Panc1 (cell line): ENCODE measurements at regions of chr18 and their contacts with region 1.

Region 1: DNA sequence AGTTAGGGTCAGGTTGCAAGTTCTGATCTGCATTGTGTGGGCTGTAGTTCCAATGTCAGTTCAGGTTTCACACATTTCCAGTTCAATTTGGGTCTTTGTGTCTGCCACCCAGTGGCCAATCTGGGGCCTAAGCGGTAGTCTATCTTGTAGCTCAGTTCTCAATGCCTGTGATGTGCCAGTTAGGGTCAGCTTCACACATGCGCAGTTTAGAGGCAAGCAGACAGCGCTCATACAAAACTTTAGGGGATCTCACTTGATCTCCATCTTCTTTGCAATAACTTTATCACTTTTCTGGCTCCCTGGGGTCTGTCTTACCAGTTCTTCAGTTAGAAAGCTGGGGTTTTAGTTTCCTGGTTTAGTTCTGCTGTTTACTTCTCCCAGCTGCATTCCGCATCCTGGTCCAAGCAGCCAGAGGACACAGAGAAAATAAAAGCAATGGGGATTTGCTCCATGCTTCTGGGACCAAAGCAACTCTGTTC is 11.0 kb upstream of the ZNF24 start:
- DNase-seq: peak; percentile 59
- ATAC-seq: peak; percentile 99
- H3K4me3 ChIP-seq: peak overlapping the region in 1 of 2 experiments; percentile 34; a peak in 1 of 4 replicates
- H3K27ac ChIP-seq: no peak overlapping the region
- H3K4me1 ChIP-seq: no peaks in the 10 kb centered on the region; the same call in 1 of the 2 replicates
- H3K27me3 ChIP-seq: no peaks in the 10 kb centered on the region
- CTCF ChIP-seq: peak; percentile 78

Region 2: DNA sequence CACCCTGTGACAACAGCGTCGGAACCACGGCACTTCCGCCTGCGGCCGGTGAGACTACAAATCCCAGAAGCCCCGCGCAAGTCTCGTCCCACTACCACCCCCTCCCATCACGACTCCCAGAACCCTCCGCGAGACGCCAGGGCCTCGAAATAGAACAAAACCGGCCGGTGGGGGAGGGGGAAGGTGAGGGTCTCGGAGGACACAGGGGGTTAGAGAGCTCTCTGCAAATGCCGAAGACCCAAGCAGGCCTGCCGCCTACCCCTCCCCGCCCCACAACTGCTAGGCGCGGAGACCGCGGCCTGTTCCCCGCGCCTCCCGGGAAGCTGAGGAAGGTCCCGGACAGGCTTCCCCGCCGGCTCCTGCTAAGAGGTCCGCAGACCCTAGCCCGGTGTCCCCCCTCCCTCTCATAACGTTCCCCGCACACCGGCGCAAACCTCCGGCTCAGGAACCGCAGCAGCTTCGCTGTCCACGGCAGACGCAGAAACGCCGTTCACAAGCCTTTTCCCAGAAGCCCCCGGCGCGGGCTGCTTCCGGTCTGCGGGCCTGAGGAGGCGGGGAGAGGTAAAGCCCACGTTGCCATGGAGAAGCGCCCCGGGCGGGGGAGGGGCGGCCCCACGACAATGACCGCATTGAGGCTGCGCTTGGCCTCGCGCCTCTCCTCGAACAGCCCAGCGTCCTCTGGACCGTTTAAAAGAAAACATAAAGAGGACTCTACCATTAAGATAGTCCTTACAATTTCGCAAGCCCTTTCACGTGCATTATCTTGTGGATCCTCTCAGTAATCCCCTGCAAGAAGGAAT is 11.0 kb before region 1 on chr18 and contains the start of gene ZNF24:
- CTCF ChIA-PET with region 1: interaction called, 14 read pairs
- POLR2A ChIA-PET with region 1: interaction called, 3 read pairs
- in situ Hi-C with region 1: no loop called
- intact Hi-C with region 1: no loop called
- DNase-seq: peak; percentile 42
- ATAC-seq: peak; percentile 94
- H3K4me3 ChIP-seq: peak within 1 kb of the TSS; percentile 75 to 82
- H3K27ac ChIP-seq: peak within 1 kb of the TSS; percentile 92
- H3K4me1 ChIP-seq: peaks cover 20% of the 10 kb centered on the region
- H3K27me3 ChIP-seq: no peaks in the 10 kb centered on the region
- CTCF ChIP-seq: no peak
- total RNA-seq, gene ZNF24: 46.8 TPM

Region 3: DNA sequence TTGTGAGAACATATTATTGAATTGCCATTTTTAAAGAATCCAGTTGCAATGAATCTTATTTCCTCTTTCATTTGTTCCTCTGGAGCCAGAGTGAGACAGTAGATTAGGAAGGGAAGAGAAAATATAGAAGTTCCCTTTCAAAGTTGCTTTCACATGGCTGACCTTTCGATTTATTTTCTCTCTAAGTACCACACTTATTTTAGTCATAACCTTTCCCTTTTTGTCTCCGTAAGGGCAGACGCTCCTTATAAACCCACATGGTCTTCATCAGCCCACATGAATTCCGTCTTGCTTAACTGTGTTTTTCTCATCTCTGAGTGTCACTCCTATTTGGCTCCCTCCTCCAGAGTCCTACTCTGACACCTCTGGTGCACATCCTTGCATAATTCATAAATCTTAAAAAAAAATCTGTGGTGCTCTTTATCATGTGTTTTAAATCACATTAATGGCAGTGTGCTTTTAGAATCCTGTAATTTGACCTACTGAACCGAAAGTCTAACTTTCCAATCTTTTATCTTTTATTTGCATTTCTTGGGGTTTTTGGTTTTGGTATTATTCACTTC is 60.4 kb after region 1 on chr18:
- CTCF ChIA-PET with region 1: no interaction called
- POLR2A ChIA-PET with region 1: no interaction called
- in situ Hi-C with region 1: no loop called
- intact Hi-C with region 1: no loop called
- DNase-seq: no peak
- ATAC-seq: no peak
- H3K4me3 ChIP-seq: no peak overlapping the region
- H3K27ac ChIP-seq: peak overlapping the region; percentile 64
- H3K4me1 ChIP-seq: peaks cover 2% of the 10 kb centered on the region; the same call in 1 of the 2 replicates
- H3K27me3 ChIP-seq: no peaks in the 10 kb centered on the region
- CTCF ChIP-seq: no peak